Naive thymus-derived CD4-positive, alpha-beta T cell (primary cell): ENCODE measurements at regions of chr5 and their contacts with region 1.

Region 1: GRCh38 chr5:79684782-79685181 is 4.9 kb upstream of the CMYA5 start:
- DNase-seq: no peak
- ATAC-seq: no peak
- H3K4me3 ChIP-seq: no peak overlapping the region
- H3K4me3 Mint-ChIP-seq: no peak overlapping the region
- H3K27ac ChIP-seq: no peak overlapping the region
- H3K27ac Mint-ChIP-seq: peak overlapping the region in 1 of 9 donors; percentile 65
- H3K4me1 ChIP-seq: no peaks in the 10 kb centered on the region
- H3K4me1 Mint-ChIP-seq: peaks cover 0 to 23% (median 17%) of the 10 kb centered on the region in 7 donors
- H3K27me3 ChIP-seq: no peaks in the 10 kb centered on the region
- H3K27me3 Mint-ChIP-seq: no peaks in the 10 kb centered on the region

Region 2: DNA sequence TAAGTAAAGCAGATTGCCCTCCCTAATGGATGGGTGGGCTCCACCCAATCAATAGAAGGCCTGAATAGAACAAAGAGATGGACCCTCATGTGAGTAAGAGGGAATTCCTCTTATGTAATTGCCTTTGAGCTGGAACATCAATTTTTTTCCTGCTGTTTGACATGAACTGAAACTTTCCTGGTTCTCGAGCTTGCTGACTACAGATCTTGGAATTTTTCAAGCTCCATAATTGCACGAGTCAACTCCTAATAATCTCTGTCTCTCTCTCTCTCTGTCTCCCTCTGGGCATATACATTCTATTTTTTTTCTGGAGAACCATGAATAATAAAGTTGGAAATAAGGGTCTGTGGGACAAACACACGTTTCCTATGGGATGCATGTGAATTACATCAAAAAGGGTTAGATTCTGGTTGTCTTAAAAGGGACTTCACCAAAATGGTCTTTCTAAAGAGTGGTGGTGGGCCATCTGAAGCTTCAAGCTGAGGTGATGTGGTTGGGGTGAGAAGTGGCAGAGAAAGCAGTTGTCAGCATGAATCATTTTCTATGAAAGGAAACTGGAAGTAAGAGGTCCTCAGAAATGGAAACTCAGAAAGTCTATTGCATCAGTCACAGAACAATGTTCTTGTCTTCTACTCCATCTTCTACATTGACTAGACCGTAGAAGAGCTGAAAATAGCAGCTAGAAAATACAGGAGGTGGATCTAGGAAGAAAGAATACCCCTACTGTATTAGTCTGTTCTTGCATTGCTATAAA is 123.8 kb before region 1 on chr5:
- CTCF ChIA-PET with region 1: no interaction called
- POLR2A ChIA-PET with region 1: no interaction called
- intact Hi-C with region 1: loop called in 1 of 2 experiments (anchors 5 kb)
- DNase-seq: peak in 1 of 9 donors; percentile 25
- ATAC-seq: no peak
- H3K4me3 ChIP-seq: no peak overlapping the region
- H3K4me3 Mint-ChIP-seq: peak overlapping the region in 1 of 10 donors; percentile 53
- H3K27ac ChIP-seq: no peak overlapping the region
- H3K27ac Mint-ChIP-seq: peak overlapping the region in 1 of 9 donors; percentile 93
- H3K4me1 ChIP-seq: no peaks in the 10 kb centered on the region
- H3K4me1 Mint-ChIP-seq: peaks cover 0 to 43% (median 4%) of the 10 kb centered on the region in 7 donors
- H3K27me3 ChIP-seq: no peaks in the 10 kb centered on the region
- H3K27me3 Mint-ChIP-seq: peaks cover 0 to 5% (median 0%) of the 10 kb centered on the region in 5 donors